ENCODE measurements at regions of chr20 and their contacts with region 1.

Region 1: GRCh38 chr20:59087829-59088433 is 45.3 kb upstream of the PRELID3B start:
- DNase-seq: peak; percentile 57
- H3K4me3 ChIP-seq: no peak overlapping the region
- H3K27ac ChIP-seq: no peak overlapping the region
- H3K4me1 ChIP-seq: no peaks in the 10 kb centered on the region
- H3K27me3 ChIP-seq: peaks cover 8 to 15% of the 10 kb centered on the region in 2 experiments
- CTCF ChIP-seq: peak; percentile 83 to 90
- POLR2A ChIP-seq: no peak

Region 2: DNA sequence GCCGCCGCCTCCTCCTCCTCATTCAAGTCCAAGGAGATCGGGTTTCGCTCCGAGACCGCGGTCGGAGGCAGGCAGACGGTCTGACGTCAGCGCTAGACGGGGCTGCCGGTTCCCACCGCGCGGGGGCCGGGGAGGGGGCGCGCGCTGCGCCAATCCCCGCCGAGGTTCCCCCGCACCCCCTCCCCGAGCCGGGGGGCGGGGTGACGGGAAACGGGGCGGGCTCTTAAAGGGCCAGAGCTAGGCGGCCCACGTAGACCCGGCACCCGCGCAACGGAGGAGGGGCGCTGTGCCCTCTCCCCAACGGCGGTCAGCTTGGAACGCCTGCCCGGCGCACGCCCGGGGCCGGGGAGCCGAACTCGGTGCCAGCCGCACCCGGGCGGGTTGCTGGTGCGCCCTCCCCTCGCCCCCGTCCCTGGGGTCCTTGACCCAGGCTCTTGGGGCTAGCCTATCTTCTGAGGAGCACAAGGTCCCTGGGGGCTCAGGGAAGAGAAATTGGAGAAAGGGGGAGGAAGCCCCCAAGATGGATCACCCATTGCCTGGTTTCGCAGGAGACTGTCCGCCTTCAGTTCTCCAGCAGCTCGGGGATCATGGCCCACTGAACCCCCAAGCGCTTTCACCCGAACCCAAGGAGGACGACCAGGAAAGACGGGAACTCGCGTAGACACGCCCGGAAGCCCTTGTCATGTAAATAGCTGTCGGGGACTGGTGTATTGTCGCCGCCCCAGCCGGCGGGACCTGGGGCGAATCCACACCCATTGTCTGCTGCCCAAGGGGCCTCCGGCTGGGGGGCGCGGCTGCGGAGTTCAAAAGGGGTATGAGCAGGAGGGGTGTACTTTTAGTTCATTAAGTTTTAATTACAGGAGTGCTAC is 1377.8 kb before region 1 on chr20 and contains the start of gene PMEPA1:
- CTCF ChIA-PET with region 1: no interaction called
- POLR2A ChIA-PET with region 1: no interaction called
- dilution Hi-C with region 1: no loop called
- intact Hi-C with region 1: no loop called
- DNase-seq: peak; percentile 96
- H3K4me3 ChIP-seq: peak within 1 kb of the TSS; percentile 79 to 88 (median 81)
- H3K27ac ChIP-seq: peak within 1 kb of the TSS; percentile 83
- H3K4me1 ChIP-seq: peaks cover 14% of the 10 kb centered on the region
- H3K27me3 ChIP-seq: no peaks in the 10 kb centered on the region
- CTCF ChIP-seq: peak in 1 of 2 donors; percentile 15
- POLR2A ChIP-seq: no peak
- total RNA-seq, gene PMEPA1: 31.6 and 47.1 TPM in 2 replicates

Region 3: DNA sequence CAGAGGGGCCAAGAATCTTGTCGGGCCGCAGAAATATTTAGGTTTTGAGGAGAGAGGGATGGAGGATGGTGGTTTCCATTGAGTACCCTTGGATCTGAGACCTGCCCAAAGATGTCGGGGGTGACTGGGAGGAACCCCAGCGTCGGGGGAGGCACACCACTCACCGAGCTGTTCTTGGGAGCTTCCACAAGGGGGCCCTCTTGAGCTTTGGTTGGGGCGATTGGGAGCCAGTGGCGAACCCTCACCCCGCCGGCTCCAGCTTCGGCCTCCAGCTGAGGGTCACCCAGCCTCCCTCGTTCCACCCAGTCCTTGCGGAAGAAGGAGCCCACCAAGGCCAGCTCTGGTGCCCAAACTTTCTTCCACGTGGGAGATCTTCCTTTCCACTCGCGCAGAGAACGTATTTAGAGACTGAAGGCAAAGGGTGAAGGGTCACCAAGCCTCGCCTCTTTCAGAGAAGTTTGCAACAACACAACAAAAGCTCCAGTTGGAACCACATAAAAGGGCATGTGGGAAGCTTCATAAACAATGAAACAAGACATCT is 606.4 kb before region 1 on chr20:
- CTCF ChIA-PET with region 1: no interaction called
- POLR2A ChIA-PET with region 1: no interaction called
- dilution Hi-C with region 1: no loop called
- intact Hi-C with region 1: loop called (anchors 10 kb)
- DNase-seq: peak; percentile 46
- H3K4me3 ChIP-seq: no peak overlapping the region
- H3K27ac ChIP-seq: no peak overlapping the region
- H3K4me1 ChIP-seq: peaks cover 4% of the 10 kb centered on the region
- H3K27me3 ChIP-seq: no peaks in the 10 kb centered on the region
- CTCF ChIP-seq: peak; percentile 74 to 88
- POLR2A ChIP-seq: no peak

Region 4: DNA sequence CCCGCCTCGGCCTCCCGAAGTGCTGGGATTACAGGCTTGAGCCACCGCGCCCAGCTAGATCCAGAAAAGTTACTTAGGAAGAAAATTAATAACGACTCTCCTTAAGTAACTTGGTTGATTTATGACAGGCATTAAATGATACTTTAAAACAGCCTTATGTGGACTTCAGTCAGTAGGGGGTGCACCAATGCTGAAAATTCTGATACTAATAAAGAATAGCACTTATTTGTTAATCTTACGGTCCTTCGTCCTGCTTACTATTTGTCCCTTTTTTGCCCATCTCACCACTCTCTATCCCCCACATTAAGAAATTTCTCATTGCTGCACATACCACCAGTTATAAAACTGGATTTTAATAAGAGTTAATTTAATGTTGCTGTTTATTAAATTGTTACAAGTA is 32.6 kb before region 1 on chr20:
- CTCF ChIA-PET with region 1: interaction called, 10 read pairs
- POLR2A ChIA-PET with region 1: no interaction called
- dilution Hi-C with region 1: no loop called
- intact Hi-C with region 1: no loop called
- DNase-seq: peak; percentile 51
- H3K4me3 ChIP-seq: no peak overlapping the region
- H3K27ac ChIP-seq: no peak overlapping the region
- H3K4me1 ChIP-seq: no peaks in the 10 kb centered on the region
- H3K27me3 ChIP-seq: peaks cover 15 to 30% of the 10 kb centered on the region in 2 experiments
- CTCF ChIP-seq: peak in 1 of 2 donors; percentile 24
- POLR2A ChIP-seq: no peak

Region 5: DNA sequence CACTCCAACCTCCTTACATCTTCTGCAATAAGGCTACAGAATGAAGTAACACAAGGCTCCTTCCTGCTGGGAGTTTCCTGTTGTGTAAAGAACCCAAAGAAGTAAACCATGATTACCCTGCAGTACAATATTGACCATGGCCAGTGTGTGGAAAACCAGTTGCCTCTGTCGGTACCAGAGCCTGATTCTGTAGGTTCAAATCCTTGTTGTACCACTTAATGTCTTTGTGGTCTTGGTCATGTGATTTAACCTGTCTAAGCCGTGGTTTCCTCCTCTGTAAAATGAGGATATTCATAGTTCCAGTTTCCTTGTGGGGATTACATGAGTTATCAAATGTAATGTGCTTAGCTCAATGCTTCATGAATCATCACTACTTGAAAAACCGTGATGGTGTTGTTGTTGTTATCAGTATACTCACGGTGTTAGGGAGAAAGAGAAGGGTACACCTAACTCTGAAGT is 14.9 kb after region 1 on chr20:
- CTCF ChIA-PET with region 1: interaction called, 22 read pairs
- POLR2A ChIA-PET with region 1: no interaction called
- dilution Hi-C with region 1: no loop called
- intact Hi-C with region 1: no loop called
- DNase-seq: no peak
- H3K4me3 ChIP-seq: no peak overlapping the region
- H3K27ac ChIP-seq: no peak overlapping the region
- H3K4me1 ChIP-seq: no peaks in the 10 kb centered on the region
- H3K27me3 ChIP-seq: no peaks in the 10 kb centered on the region
- CTCF ChIP-seq: no peak
- POLR2A ChIP-seq: no peak

Region 6: DNA sequence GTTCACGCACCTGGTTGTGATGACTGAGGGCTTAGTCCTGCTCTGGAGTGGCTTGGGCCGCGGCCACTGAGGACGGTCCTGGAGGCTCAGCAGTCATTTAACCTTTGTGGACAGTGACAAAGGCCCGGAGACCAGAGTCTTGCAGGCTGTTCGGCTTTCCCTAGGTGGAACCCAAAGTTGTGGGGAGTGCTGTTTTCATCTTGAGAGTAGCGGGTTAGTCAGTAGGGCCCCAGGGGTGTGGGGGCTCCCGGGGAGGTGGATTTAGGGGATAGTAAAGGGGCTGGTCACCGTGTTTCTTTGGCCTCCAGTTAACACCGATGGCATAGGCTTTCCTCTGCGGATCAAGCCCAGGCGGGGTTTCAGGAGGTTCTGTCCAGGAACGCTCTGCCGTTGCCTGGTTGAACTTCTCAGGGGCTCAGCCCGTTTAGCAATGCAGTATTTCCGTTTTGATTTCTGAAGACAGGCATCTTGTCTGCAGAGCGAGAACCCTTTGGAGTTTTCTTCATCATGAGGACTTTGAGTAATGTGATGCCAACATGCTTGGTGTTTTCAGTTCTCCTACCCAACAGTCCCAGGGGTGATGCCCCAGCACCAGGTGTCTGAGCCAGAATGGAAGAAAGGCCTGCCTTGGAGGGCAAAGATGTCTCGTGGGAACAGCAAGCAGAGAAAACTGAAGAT is 107.5 kb after region 1 on chr20:
- CTCF ChIA-PET with region 1: no interaction called
- POLR2A ChIA-PET with region 1: no interaction called
- dilution Hi-C with region 1: no loop called
- intact Hi-C with region 1: no loop called
- DNase-seq: no peak
- H3K4me3 ChIP-seq: no peak overlapping the region
- H3K27ac ChIP-seq: no peak overlapping the region
- H3K4me1 ChIP-seq: no peaks in the 10 kb centered on the region
- H3K27me3 ChIP-seq: no peaks in the 10 kb centered on the region
- CTCF ChIP-seq: no peak
- POLR2A ChIP-seq: no peak

Region 7: DNA sequence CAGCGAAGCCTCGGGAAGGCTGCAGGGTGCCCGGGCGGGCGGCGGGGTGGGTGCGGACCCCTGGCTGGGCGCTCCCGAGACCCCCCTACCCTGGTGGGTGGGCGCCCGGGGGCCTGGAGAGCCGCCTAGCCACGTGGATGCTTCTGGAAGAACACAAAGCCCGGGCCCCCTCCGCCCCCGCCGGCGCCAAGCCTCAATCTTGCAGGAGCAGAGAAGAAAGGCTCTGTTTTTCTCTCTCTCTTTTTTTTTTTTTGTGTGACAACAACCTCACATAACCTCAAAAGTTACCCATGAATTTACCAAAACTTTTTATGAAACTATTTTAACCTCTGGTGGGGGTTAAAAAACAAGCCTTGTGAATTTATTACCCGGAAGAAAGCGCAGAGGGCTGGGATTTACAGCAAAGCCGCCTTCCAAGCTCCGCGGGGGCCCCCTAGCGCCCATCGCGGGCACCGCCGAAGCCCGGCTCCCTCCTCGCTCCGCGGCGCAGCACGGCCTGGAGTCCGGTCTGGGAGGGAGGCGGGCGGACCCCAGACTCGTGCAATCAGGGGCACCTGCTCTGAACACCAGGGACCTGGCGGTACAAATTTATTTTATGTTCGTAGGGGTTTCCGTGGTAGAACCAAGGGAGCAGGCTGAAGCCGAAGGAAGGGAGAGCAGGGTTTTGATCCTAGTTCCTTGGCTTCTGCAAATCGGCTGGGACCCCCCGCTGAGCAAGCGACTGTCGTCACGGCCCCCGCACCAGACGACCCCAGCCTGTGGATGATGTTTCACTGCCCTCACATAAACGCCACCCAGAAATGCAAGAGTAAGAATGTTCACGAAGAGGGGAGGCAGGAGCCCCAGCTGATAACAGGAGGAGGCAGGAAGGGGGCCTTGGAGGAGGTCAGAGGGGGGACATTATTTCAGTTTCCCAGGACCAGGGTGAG is 134.6 kb after region 1 on chr20:
- CTCF ChIA-PET with region 1: interaction called, 127 read pairs
- POLR2A ChIA-PET with region 1: no interaction called
- dilution Hi-C with region 1: no loop called
- intact Hi-C with region 1: loop called (anchors 1 kb)
- DNase-seq: peak; percentile 74
- H3K4me3 ChIP-seq: peak overlapping the region; percentile 42 to 71 (median 61)
- H3K27ac ChIP-seq: no peak overlapping the region
- H3K4me1 ChIP-seq: peaks cover 7% of the 10 kb centered on the region
- H3K27me3 ChIP-seq: peaks cover 20% of the 10 kb centered on the region in 2 experiments
- CTCF ChIP-seq: peak; percentile 96 to 97
- POLR2A ChIP-seq: no peak

Region 8: DNA sequence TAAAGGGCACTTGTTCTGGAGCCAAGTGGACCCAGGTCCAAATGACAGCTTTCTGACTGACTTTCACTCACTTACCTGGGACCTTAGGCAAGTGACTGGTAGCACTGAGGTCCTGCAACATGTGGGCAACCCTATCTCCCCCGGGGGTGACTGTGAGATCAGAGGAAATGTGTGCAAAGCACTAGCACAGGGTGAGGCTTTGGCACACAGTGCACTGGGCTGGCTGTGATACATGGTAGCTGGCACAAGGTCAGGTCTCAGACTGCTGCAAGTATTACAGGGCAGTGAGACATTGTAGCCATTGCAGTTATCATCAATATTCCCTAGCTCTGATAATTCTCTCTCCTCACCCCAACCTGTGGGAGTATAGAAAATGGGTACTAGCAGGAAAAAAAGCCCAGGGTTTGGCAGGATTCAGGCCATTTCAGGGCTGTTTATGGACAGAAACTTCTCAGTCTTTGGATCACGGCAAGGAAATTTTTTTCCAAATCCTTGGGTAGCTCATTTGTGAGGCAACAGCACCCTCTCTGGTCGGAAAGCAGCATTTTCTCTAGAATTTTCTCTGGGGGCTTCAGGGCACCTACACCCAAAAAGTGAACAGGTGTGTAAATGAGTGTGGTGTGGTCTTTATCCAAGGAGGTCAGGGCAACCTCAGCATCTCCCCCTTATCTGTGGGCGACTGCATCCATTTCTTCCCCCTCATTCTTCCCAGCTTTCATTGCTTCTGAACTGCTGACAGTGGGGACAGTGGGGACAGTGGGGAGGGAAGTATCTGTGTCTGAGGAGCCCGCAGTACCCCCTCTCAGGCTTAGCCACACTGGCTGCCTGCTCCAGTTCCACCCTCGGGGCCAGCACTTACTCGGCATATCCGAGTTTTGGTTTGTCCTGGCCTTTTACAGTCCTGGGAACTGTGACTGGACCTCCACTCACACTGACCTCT is 367.7 kb after region 1 on chr20:
- CTCF ChIA-PET with region 1: interaction called, 21 read pairs
- POLR2A ChIA-PET with region 1: no interaction called
- dilution Hi-C with region 1: no loop called
- intact Hi-C with region 1: loop called (anchors 2 kb)
- DNase-seq: peak; percentile 9
- H3K4me3 ChIP-seq: no peak overlapping the region
- H3K27ac ChIP-seq: no peak overlapping the region
- H3K4me1 ChIP-seq: no peaks in the 10 kb centered on the region
- H3K27me3 ChIP-seq: no peaks in the 10 kb centered on the region
- CTCF ChIP-seq: peak in 1 of 2 donors; percentile 39
- POLR2A ChIP-seq: no peak

Measured in endothelial cell of umbilical vein (primary cell).